ENCODE measurements at regions of chr1 and their contacts with region 1.

Region 1: DNA sequence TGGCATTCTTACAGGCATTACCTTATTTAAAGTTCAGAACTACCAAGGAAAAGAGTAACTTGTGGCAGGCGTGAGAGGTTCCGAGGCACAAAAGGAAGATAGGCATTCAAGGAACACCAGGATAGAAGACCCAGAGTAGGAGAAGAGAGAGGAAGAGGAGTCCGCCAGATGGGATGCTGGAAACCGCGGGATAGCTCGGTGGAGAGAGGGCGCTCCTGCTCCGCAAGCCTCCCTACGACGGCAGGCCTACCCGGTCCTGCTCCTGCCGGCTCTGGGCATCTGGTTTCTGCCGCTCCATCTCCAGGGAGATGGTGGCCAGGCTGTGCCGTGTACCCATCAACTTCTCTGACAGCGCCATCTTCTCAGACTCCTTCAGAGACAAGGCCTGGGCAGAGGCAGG is 5.4 kb upstream of the NBPF1 start:
- DNase-seq: no peak
- H3K4me3 ChIP-seq: no peak overlapping the region
- H3K27ac ChIP-seq: no peak overlapping the region
- H3K4me1 ChIP-seq: peaks cover 9 to 27% (median 14%) of the 10 kb centered on the region in 3 donors
- H3K27me3 ChIP-seq: peaks cover 0 to 7% (median 0%) of the 10 kb centered on the region in 4 donors
- CTCF ChIP-seq: no peak
- POLR2A ChIP-seq: no peak

Region 2: GRCh38 chr1:16946646-16947045 is 327.9 kb after region 1 on chr1:
- intact Hi-C with region 1: loop called (anchors 2 kb)
- DNase-seq: no peak
- H3K4me3 ChIP-seq: no peak overlapping the region
- H3K27ac ChIP-seq: no peak overlapping the region
- H3K4me1 ChIP-seq: peaks cover 8 to 31% (median 9%) of the 10 kb centered on the region in 3 donors
- H3K27me3 ChIP-seq: no peaks in the 10 kb centered on the region
- CTCF ChIP-seq: no peak
- POLR2A ChIP-seq: no peak

Measured in esophagus squamous epithelium (tissue), 5 donors.